ENCODE measurements at regions of chr6 and their contacts with region 1.

Region 1: GRCh38 chr6:75266716-75267291 is 17.8 kb downstream of the TMEM30A start:
- DNase-seq: peak in 2 of 9 experiments; percentile 54 to 68
- ATAC-seq: peak; percentile 73
- H3K4me3 ChIP-seq: no peak overlapping the region
- H3K4me3 Mint-ChIP-seq: no peak overlapping the region
- H3K27ac ChIP-seq: no peak overlapping the region
- H3K27ac Mint-ChIP-seq: no peak overlapping the region
- H3K4me1 ChIP-seq: peaks cover 17% of the 10 kb centered on the region
- H3K4me1 Mint-ChIP-seq: peaks cover 43% of the 10 kb centered on the region
- H3K27me3 ChIP-seq: no peaks in the 10 kb centered on the region
- H3K27me3 Mint-ChIP-seq: no peaks in the 10 kb centered on the region
- CTCF ChIP-seq: peak; percentile 92

Region 2: GRCh38 chr6:75278474-75279077 is 11.8 kb after region 1 on chr6:
- CTCF ChIA-PET with region 1: interaction called, 25 read pairs
- POLR2A ChIA-PET with region 1: interaction called, 9 read pairs
- intact Hi-C with region 1: no loop called
- DNase-seq: peak in 2 of 9 experiments; percentile 9 to 17
- ATAC-seq: no peak
- H3K4me3 ChIP-seq: no peak overlapping the region
- H3K4me3 Mint-ChIP-seq: peak overlapping the region; percentile 0
- H3K27ac ChIP-seq: no peak overlapping the region
- H3K27ac Mint-ChIP-seq: peak overlapping the region; percentile 4
- H3K4me1 ChIP-seq: peaks cover 37% of the 10 kb centered on the region
- H3K4me1 Mint-ChIP-seq: peaks cover 71% of the 10 kb centered on the region
- H3K27me3 ChIP-seq: no peaks in the 10 kb centered on the region
- H3K27me3 Mint-ChIP-seq: no peaks in the 10 kb centered on the region
- CTCF ChIP-seq: no peak

Region 3: GRCh38 chr6:75284632-75285286 is 18.0 kb after region 1 on chr6 and contains the start of gene TMEM30A:
- CTCF ChIA-PET with region 1: interaction called, 25 read pairs
- POLR2A ChIA-PET with region 1: interaction called, 9 read pairs
- intact Hi-C with region 1: loop called in 1 of 2 experiments (anchors 1 kb)
- DNase-seq: peak; percentile 89 to 100 (median 96)
- ATAC-seq: peak; percentile 96
- H3K4me3 ChIP-seq: peak within 1 kb of the TSS; percentile 65 to 97
- H3K4me3 Mint-ChIP-seq: no peak within 1 kb of the TSS
- H3K27ac ChIP-seq: peak within 1 kb of the TSS; percentile 72 to 88
- H3K27ac Mint-ChIP-seq: no peak within 1 kb of the TSS
- H3K4me1 ChIP-seq: peaks cover 47% of the 10 kb centered on the region
- H3K4me1 Mint-ChIP-seq: peaks cover 44% of the 10 kb centered on the region
- H3K27me3 ChIP-seq: no peaks in the 10 kb centered on the region
- H3K27me3 Mint-ChIP-seq: no peaks in the 10 kb centered on the region
- CTCF ChIP-seq: no peak
- total RNA-seq, gene TMEM30A: 19.4 to 27.1 TPM

Region 4: DNA sequence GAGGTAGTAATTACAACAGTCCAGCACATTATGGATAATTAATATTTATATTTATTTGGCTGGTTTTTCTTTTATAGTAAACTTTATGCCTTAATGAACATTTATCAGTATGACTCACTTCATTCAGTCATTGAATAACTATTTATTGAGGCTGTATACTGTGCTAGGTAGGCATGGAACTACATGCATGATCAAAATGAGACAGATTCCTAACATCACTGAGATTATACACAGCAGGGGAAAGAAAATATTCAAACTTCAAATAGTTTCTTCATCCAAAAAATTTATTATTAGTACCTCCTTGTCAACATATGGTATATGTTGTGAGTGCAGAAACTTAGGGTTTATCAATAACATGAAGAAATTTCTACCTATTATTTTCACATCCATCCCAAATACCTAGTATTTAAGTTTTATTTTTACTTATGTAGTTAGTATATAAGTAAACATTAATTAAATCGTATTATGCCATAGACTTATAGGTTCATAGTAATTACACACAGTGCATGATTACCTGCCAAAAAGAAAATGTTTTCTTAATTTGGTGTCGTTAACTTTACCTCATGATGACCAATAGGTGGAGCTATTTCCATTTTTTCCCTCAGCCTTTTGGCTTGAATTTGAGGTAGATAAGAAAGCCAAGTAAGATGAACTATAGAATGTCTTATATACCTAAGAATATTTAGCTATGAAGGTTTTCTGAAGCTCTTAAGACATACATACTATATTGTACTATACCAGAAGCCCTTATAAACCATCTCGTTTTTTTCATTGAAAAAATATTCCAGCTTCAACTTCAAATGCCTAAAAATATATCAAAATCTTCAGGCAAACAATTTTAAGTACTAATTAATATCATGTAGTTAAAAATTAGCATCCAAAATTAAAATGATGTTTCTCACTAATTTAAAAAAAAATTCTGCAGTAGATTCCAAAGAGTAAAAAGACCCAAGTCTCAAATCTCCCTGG is 30.3 kb after region 1 on chr6:
- CTCF ChIA-PET with region 1: interaction called, 5 read pairs
- POLR2A ChIA-PET with region 1: no interaction called
- intact Hi-C with region 1: loop called in 1 of 2 experiments (anchors 2 kb)
- DNase-seq: peak in 2 of 9 experiments; percentile 65 to 76
- ATAC-seq: peak; percentile 54
- H3K4me3 ChIP-seq: no peak overlapping the region
- H3K4me3 Mint-ChIP-seq: no peak overlapping the region
- H3K27ac ChIP-seq: no peak overlapping the region
- H3K27ac Mint-ChIP-seq: no peak overlapping the region
- H3K4me1 ChIP-seq: no peaks in the 10 kb centered on the region
- H3K4me1 Mint-ChIP-seq: no peaks in the 10 kb centered on the region
- H3K27me3 ChIP-seq: no peaks in the 10 kb centered on the region
- H3K27me3 Mint-ChIP-seq: no peaks in the 10 kb centered on the region
- CTCF ChIP-seq: peak; percentile 79

Region 5: DNA sequence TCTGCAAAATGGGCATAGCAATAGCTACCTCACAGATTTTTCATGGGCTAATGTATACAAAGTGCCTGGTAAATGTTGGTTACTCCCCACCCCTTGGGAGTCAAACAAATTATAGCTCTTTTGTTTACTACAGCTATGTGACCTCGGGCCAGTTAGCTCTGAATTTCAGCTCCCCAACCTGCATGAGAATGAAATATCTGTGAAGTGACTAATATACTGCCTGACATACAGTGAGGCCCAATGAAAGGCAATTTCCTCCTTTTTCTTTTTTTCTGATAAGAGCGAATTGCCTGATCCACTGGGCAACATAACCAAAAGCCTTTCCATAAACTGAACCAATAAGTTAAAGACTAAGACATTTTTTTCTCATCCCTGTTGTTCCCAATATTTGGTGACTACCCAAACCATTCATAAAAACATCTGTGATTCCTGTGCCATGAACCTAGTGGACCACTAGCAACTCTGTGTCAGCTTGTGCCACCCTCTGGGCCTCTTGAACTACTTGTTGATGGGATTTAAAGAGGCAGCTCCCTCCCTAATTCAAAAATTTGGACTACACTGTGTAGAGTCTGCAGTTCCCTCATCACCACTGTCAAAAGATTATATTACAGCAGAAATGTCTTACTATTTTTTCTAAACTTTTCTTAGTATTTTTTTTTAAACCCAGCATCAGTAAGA is 109.7 kb after region 1 on chr6:
- CTCF ChIA-PET with region 1: no interaction called
- POLR2A ChIA-PET with region 1: no interaction called
- intact Hi-C with region 1: loop called in 1 of 2 experiments (anchors 10 kb)
- DNase-seq: no peak
- ATAC-seq: no peak
- H3K4me3 ChIP-seq: no peak overlapping the region
- H3K4me3 Mint-ChIP-seq: no peak overlapping the region
- H3K27ac ChIP-seq: no peak overlapping the region
- H3K27ac Mint-ChIP-seq: no peak overlapping the region
- H3K4me1 ChIP-seq: no peaks in the 10 kb centered on the region
- H3K4me1 Mint-ChIP-seq: no peaks in the 10 kb centered on the region
- H3K27me3 ChIP-seq: no peaks in the 10 kb centered on the region
- H3K27me3 Mint-ChIP-seq: peaks cover 4% of the 10 kb centered on the region
- CTCF ChIP-seq: no peak

Region 6: GRCh38 chr6:75526502-75527127 is 259.8 kb after region 1 on chr6:
- CTCF ChIA-PET with region 1: interaction called, 8 read pairs
- POLR2A ChIA-PET with region 1: no interaction called
- intact Hi-C with region 1: loop called (anchors 1 kb)
- DNase-seq: peak in 8 of 9 experiments; percentile 12 to 76 (median 42)
- ATAC-seq: peak; percentile 84
- H3K4me3 ChIP-seq: no peak overlapping the region
- H3K4me3 Mint-ChIP-seq: no peak overlapping the region
- H3K27ac ChIP-seq: no peak overlapping the region
- H3K27ac Mint-ChIP-seq: no peak overlapping the region
- H3K4me1 ChIP-seq: no peaks in the 10 kb centered on the region
- H3K4me1 Mint-ChIP-seq: no peaks in the 10 kb centered on the region
- H3K27me3 ChIP-seq: peaks cover 0 to 3% of the 10 kb centered on the region in 2 experiments
- H3K27me3 Mint-ChIP-seq: peaks cover 36% of the 10 kb centered on the region
- CTCF ChIP-seq: peak; percentile 66

Region 7: GRCh38 chr6:75546381-75546780 is 279.6 kb after region 1 on chr6:
- CTCF ChIA-PET with region 1: interaction called, 5 read pairs
- POLR2A ChIA-PET with region 1: no interaction called
- intact Hi-C with region 1: loop called in 1 of 2 experiments (anchors 5 kb)
- DNase-seq: peak in 2 of 9 experiments; percentile 7 to 18
- ATAC-seq: no peak
- H3K4me3 ChIP-seq: no peak overlapping the region
- H3K4me3 Mint-ChIP-seq: no peak overlapping the region
- H3K27ac ChIP-seq: no peak overlapping the region
- H3K27ac Mint-ChIP-seq: no peak overlapping the region
- H3K4me1 ChIP-seq: no peaks in the 10 kb centered on the region
- H3K4me1 Mint-ChIP-seq: no peaks in the 10 kb centered on the region
- H3K27me3 ChIP-seq: no peaks in the 10 kb centered on the region
- H3K27me3 Mint-ChIP-seq: no peaks in the 10 kb centered on the region
- CTCF ChIP-seq: no peak